Naive thymus-derived CD8-positive, alpha-beta T cell (primary cell): ENCODE measurements at regions of chr12 and their contacts with region 1.

Region 1: DNA sequence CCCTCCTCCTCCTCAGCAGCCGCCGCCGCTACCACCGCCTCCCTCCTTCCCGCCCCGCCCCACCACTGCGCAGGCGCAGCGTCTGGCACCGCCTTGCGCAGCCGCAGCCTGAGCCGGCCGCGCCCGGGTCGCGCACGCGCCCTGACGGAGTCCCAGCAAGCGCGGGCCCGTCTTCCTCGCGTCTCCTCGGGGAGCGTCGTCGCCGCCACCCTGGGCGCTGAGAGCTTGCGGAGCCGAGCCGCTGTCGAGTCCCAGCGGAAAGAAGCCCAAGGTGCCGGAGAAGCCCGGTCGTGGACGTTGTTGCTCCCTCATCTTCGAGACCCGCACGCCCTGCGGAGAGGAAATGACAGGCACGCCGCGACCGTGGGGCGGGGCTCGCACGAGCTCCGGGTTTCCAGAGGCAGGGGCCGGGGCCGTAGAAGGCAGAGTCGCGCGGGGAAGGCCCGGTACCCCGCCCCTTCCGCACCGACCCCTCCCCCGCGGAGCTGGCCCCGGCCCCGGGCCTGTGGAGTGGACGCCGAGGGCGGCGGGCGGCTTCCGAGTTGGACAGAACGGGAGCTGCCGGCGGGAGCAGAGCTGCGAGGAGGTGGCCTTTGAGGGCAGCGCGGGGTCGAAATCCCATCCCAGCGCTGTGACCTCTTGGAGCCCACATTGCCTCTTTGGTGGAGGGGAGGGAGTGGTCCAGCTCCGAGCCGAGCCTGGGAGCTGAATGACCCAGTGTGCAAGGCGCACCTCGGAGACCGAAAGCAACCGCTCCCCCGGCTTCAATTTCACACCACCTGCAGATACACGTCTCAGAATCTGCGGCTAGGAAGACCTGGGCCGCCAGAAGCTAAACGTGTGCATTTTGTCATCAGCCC is 469 bp upstream of the RAB35 start:
- DNase-seq: peak; percentile 94 to 98 (median 98)
- ATAC-seq: peak; percentile 77
- H3K4me3 Mint-ChIP-seq: peak overlapping the region; percentile 70 to 95 (median 90)
- H3K27ac Mint-ChIP-seq: peak overlapping the region; percentile 76 to 95 (median 88)
- H3K4me1 Mint-ChIP-seq: peaks cover 40 to 81% (median 77%) of the 10 kb centered on the region in 4 donors
- H3K27me3 Mint-ChIP-seq: no peaks in the 10 kb centered on the region

Region 2: DNA sequence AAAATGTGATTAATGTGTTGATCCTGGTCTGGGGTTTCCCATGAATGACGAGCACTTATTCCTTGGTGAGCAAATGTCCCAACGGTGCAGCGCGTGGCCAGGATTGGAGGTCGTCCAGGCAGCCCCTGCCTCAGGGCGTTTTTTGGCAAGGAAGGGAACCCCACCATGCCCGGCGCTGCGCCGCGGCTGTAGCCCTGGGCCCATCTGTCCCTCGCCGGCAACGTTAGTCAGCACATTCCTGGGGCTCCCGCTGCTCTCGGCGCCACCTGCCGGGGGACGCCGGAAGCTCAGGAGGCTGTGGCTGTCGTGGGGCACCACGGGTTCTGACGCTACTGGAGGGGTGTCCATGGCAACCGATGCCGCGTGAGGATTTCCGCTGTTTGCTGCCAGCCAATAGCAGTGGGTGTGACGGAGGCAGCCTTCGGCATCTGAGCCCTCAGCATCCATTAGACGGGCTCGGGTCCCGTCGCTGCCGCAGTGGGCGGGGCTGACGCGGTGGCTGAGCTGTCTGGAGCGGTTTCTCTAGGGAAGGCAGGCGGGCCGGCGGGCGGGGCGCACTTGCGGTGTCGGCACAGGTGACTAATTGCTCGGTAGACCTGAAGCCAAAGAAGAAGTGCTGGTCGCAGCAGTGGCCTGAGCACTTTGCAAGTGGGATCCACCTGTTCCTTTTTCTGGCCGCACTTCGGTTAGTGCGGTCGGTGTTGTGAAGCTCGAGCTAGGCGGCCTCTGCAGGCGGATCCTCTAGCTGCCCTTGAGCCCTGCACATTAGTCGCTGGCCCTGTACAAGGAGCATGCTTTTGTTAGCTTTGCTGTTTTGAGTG is 30.0 kb before region 1 on chr12:
- POLR2A ChIA-PET with region 1: interaction called, 23 read pairs
- DNase-seq: peak; percentile 98 to 100 (median 99)
- ATAC-seq: peak; percentile 97
- H3K4me3 Mint-ChIP-seq: peak overlapping the region; percentile 56 to 86 (median 79)
- H3K27ac Mint-ChIP-seq: peak overlapping the region; percentile 62 to 96 (median 87)
- H3K4me1 Mint-ChIP-seq: peaks cover 14 to 20% (median 16%) of the 10 kb centered on the region in 4 donors
- H3K27me3 Mint-ChIP-seq: peaks cover 0 to 1% (median 0%) of the 10 kb centered on the region in 5 donors

Region 3: GRCh38 chr12:120104924-120105323 is 12.1 kb before region 1 on chr12:
- POLR2A ChIA-PET with region 1: interaction called, 13 read pairs
- DNase-seq: no peak
- ATAC-seq: no peak
- H3K4me3 Mint-ChIP-seq: peak overlapping the region in 1 of 10 donors; percentile 33
- H3K27ac Mint-ChIP-seq: peak overlapping the region in 3 of 10 donors; percentile 8 to 84 (median 31)
- H3K4me1 Mint-ChIP-seq: peaks cover 18 to 57% (median 42%) of the 10 kb centered on the region in 4 donors
- H3K27me3 Mint-ChIP-seq: no peaks in the 10 kb centered on the region